ENCODE measurements at regions of chr3 and their contacts with region 1.

Region 1: GRCh38 chr3:58008140-58009025 is at the start of gene FLNB:
- DNase-seq: peak; percentile 68 to 92 (median 74)
- ATAC-seq: peak; percentile 87
- H3K4me3 ChIP-seq: peak within 1 kb of the TSS; percentile 67 to 75
- H3K27ac ChIP-seq: peak within 1 kb of the TSS; percentile 56 to 73
- H3K4me1 ChIP-seq: peaks cover 14 to 44% of the 10 kb centered on the region in 2 donors
- H3K27me3 ChIP-seq: no peaks in the 10 kb centered on the region
- CTCF ChIP-seq: peak; percentile 48 to 72
- polyA plus RNA-seq, gene FLNB: 85.2 to 107 (median 93.3) TPM

Region 2: DNA sequence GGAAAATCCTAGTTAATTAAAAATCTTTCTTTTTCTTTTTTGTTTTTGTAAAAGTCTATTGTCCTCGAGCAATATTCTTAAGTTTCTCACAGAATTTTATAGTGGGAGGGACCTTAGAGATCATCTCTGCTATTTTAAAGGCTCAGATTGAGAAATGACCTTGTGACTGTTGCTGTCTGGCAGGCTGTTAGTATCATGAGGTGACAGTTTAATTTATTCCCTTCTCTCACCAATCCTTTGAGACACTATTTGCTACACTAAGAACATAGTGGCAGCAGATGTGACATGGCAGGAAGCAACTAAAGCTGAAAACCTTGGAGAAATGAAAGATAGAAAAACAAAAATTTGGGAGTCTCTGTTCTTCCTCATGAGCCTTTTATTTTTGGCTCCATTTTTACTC is 756.0 kb before region 1 on chr3:
- intact Hi-C with region 1: no loop called
- DNase-seq: no peak
- ATAC-seq: no peak
- H3K4me3 ChIP-seq: no peak overlapping the region
- H3K27ac ChIP-seq: no peak overlapping the region
- H3K4me1 ChIP-seq: no peaks in the 10 kb centered on the region
- H3K27me3 ChIP-seq: no peaks in the 10 kb centered on the region
- CTCF ChIP-seq: no peak

Region 3: DNA sequence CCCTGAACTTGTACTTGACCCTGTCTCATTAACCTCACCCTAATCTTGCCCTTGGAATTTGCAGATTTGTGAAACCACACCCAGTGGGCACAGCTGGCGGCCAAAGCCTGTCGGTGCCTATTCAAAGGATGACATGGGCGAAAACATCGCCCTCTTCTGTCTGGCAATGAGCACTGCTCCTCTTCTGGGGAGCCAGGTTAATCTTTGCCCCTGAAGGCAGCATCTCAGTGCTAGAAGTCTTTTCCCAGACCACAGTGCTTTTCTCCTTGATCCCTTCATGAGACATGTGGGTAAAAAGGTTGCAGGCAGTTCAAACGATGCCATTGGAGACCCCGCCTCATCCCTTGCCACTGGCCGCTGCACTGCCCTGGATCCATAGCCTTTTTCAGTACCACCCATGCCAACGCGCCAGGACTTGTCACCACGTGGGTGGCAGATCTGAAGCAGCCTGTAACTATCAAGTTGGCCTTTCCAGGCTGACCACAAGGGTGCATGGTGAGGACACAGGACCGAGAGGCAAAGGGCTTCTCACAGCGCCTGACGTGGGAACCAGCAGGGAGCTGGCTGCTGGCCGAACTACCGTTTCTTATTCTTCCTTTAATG is 208.9 kb after region 1 on chr3:
- intact Hi-C with region 1: no loop called
- DNase-seq: peak in 3 of 4 donors; percentile 66 to 79 (median 67)
- ATAC-seq: peak; percentile 95
- H3K4me3 ChIP-seq: no peak overlapping the region
- H3K27ac ChIP-seq: no peak overlapping the region
- H3K4me1 ChIP-seq: peaks cover 0 to 25% of the 10 kb centered on the region in 2 donors
- H3K27me3 ChIP-seq: no peaks in the 10 kb centered on the region
- CTCF ChIP-seq: peak; percentile 59 to 79

Region 4: GRCh38 chr3:58305882-58306711 is 297.7 kb after region 1 on chr3 and contains the starts of genes HTD2 and RPP14:
- intact Hi-C with region 1: loop called in 1 of 2 experiments (anchors 10 kb)
- DNase-seq: peak; percentile 98 to 100 (median 99)
- ATAC-seq: peak; percentile 96
- H3K4me3 ChIP-seq: peak within 1 kb of the TSS; percentile 72 to 81
- H3K27ac ChIP-seq: peak within 1 kb of the TSS; percentile 96 to 97
- H3K4me1 ChIP-seq: peaks cover 19 to 32% of the 10 kb centered on the region in 2 donors
- H3K27me3 ChIP-seq: peaks cover 0 to 8% of the 10 kb centered on the region in 2 donors
- CTCF ChIP-seq: peak; percentile 94 to 95
- polyA plus RNA-seq, gene HTD2: 10.8 to 14.0 (median 12.3) TPM
- polyA plus RNA-seq, gene RPP14: 17.6 to 21.5 (median 20.7) TPM

Measured in left lung (tissue), 14 donors.